ENCODE measurements at regions of chr2 and their contacts with region 1.

Region 1: DNA sequence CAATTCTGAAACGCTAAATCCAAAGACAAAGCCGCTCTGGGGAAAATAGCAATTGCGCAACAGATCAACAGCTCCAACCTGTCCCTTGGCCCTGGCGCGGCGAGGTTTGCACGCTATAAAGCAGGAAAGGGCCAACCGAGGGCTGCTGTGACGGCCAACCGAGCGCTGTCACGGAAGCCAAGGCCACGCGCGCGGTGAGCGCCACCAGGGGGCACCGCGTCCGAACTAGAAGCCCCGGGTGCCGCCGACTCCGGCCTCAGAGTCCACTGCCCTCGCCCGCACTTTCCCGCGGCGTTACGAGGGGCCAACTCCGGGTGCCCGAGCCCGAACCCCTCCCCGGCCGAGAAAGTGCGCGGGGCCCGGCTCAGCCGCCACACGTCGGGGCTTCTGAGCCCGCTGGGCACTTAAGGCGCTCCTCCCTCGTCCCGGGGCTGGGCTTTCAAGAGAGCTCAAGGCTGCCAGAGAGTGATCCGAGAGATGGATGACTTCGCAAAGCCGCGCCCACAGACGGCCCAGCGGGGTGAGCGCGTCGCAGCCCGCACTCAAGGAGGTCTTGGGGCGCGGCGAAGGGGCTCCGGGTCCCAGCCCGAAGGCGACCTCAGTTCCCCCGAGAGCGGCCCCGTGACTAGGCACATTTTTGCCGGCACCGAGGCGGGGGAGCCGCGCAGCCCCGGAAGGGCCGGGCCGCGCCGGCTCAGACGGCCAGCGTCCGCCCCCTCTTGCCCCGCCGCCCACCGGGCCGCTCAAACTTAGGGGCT is 897 bp downstream of the NFE2L2 start:
- DNase-seq: peak; percentile 95
- H3K4me3 Mint-ChIP-seq: peak overlapping the region; percentile 93
- H3K27ac Mint-ChIP-seq: peak overlapping the region; percentile 99
- H3K4me1 Mint-ChIP-seq: peaks cover 49% of the 10 kb centered on the region
- H3K27me3 Mint-ChIP-seq: peaks cover 3% of the 10 kb centered on the region

Region 2: GRCh38 chr2:176763851-176764404 is 499.7 kb before region 1 on chr2:
- CTCF ChIA-PET with region 1: no interaction called
- POLR2A ChIA-PET with region 1: no interaction called
- DNase-seq: no peak
- H3K4me3 Mint-ChIP-seq: no peak overlapping the region
- H3K27ac Mint-ChIP-seq: no peak overlapping the region
- H3K4me1 Mint-ChIP-seq: no peaks in the 10 kb centered on the region
- H3K27me3 Mint-ChIP-seq: peaks cover 20% of the 10 kb centered on the region

Region 3: DNA sequence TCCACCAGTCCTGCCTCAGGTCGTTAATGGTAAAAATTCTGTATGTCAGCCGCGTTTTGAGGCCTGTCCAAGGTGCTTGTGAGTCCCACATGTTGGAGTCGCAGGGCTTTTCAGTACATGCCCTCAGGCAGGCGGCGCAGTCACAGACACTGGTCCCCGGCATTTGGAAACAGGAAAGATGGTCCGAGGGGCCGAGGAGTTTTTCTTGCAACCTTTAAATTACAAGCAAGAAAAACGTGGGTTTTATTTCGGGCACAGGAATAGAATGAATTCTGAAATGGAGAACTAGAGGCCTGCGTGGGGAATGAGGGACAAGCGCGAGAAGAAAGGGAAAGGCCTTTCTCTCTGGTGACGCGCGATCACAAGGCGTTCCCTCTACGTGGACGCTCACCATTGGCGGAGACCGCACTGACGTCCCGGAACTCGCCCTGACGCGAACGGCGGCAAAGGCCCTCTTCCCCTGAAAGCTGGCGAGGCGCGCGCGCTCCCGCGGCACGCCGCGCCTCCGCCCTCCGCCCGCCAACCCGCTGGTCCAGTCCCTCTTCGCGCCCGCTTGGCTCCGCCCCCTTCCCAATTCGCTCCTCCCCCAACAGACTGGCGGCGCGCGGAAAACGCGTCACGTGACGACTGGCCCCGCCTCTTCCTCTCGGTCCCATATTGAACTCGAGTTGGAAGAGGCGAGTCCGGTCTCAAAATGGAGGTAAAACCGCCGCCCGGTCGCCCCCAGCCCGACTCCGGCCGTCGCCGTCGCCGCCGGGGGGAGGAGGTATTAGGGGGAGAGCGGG is 51.3 kb before region 1 on chr2 and contains the start of gene HNRNPA3:
- CTCF ChIA-PET with region 1: interaction called, 27 read pairs
- POLR2A ChIA-PET with region 1: interaction called, 255 read pairs
- DNase-seq: peak; percentile 100
- H3K4me3 Mint-ChIP-seq: peak within 1 kb of the TSS; percentile 94
- H3K27ac Mint-ChIP-seq: peak within 1 kb of the TSS; percentile 100
- H3K4me1 Mint-ChIP-seq: peaks cover 46% of the 10 kb centered on the region
- H3K27me3 Mint-ChIP-seq: no peaks in the 10 kb centered on the region
- total RNA-seq, gene HNRNPA3: 309 to 312 TPM

Region 4: DNA sequence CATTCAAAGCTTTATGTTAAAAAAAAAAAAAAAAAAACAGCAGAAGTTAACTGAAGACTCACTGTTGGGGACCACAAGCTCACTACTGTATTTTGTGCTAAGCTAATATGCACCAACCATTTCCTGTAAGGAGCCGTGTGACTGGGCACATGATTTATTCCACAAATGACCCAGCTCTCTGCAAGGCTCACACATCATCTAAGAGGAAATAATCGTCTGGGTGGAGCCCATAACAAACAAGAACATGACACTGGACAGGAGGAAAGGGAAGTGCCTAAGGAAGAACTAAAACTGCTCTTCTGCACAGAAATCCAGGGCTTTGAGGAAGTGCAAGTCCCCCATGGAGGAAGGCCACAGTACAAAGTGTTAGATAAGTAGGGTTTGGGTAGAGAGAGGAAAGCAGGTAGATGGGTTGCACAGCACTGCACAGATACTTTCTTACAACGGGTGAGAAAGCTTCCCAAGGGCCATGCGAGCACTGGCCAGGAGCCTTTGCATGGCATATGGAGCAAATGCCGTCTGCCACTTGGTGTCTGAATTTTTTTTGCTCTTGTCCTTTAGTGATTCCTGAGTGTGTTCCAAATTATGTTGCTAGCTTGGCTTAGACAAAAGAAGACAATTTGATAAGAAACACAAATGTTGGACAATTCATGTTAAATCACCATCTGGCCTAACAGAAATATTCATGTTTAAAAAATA is 23.5 kb before region 1 on chr2:
- CTCF ChIA-PET with region 1: interaction called, 57 read pairs
- POLR2A ChIA-PET with region 1: interaction called, 142 read pairs
- DNase-seq: peak; percentile 64
- H3K4me3 Mint-ChIP-seq: peak overlapping the region; percentile 34
- H3K27ac Mint-ChIP-seq: peak overlapping the region; percentile 84
- H3K4me1 Mint-ChIP-seq: peaks cover 74% of the 10 kb centered on the region
- H3K27me3 Mint-ChIP-seq: no peaks in the 10 kb centered on the region

Region 5: GRCh38 chr2:177289824-177290628 is 26.4 kb after region 1 on chr2:
- CTCF ChIA-PET with region 1: interaction called, 125 read pairs
- POLR2A ChIA-PET with region 1: interaction called, 187 read pairs
- DNase-seq: peak; percentile 35
- H3K4me3 Mint-ChIP-seq: peak overlapping the region; percentile 45
- H3K27ac Mint-ChIP-seq: peak overlapping the region; percentile 90
- H3K4me1 Mint-ChIP-seq: peaks cover 41% of the 10 kb centered on the region
- H3K27me3 Mint-ChIP-seq: no peaks in the 10 kb centered on the region

Region 6: DNA sequence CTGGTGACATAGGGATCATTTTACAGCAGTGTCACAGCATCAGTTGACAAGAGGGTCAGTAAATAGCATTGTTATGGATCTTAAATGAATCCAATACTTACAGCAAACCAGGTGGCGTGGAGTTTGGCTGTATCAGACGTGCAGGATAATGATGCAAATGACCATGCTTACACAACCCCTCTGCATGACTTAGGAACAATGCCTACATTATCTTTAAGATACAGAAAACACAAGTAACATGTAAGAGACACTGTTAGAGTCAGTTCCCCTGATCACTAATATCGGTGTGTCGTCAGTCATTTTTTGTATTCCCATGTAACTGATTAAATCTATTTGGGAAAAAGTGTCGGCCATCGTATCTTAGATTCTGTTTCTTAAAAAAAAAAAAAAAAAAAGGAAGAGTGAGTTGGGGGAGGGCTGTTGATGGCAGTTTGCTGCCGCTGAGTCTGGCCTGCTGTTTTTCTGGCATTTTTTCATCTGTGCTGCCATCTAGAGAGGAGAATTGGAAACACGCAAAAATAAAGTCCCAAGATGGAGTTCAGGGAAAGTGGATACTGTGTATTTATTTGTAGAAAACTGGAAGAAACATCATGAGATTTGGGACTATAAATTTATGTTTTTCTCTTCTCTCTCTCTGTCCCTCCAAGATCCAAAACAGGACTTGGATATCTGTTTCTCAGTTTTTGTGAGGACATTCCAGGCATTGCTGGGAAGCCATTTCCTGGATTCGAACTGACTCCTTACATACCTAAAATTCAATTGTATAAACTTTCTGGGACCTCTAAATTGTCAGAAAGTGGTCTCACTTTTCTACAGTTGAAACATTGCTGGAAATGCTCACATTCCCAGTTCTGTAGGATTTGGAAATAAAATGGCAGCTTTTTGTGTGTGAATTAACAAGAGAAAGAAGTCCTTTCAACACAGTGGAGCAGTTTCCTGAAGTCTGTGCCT is 68.7 kb after region 1 on chr2:
- CTCF ChIA-PET with region 1: interaction called, 25 read pairs
- POLR2A ChIA-PET with region 1: interaction called, 17 read pairs
- DNase-seq: peak; percentile 41
- H3K4me3 Mint-ChIP-seq: no peak overlapping the region
- H3K27ac Mint-ChIP-seq: no peak overlapping the region
- H3K4me1 Mint-ChIP-seq: peaks cover 12% of the 10 kb centered on the region
- H3K27me3 Mint-ChIP-seq: no peaks in the 10 kb centered on the region

Region 7: GRCh38 chr2:177353187-177353478 is 89.5 kb after region 1 on chr2:
- CTCF ChIA-PET with region 1: no interaction called
- POLR2A ChIA-PET with region 1: no interaction called
- DNase-seq: no peak
- H3K4me3 Mint-ChIP-seq: no peak overlapping the region
- H3K27ac Mint-ChIP-seq: no peak overlapping the region
- H3K4me1 Mint-ChIP-seq: no peaks in the 10 kb centered on the region
- H3K27me3 Mint-ChIP-seq: no peaks in the 10 kb centered on the region

Region 8: DNA sequence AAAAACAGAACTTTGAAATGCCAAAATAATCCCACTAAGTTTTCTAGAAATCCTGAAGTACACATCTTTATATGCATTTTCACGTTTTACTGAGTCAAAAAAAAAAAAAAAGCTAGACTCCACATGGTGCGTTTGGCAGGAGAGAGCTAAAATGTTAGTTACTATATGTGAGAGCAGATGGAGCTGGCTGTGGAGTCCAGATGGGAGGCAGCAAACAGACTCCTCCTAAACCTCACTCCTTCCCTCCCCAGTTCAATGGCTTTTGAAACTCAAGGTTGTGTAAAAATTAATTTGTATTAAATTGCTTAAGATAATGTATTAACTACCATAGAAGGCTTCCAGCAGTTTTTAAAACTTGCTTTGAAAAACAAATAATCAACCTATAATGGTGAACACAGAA is 377.7 kb after region 1 on chr2:
- CTCF ChIA-PET with region 1: no interaction called
- POLR2A ChIA-PET with region 1: no interaction called
- DNase-seq: no peak
- H3K4me3 Mint-ChIP-seq: no peak overlapping the region
- H3K27ac Mint-ChIP-seq: no peak overlapping the region
- H3K4me1 Mint-ChIP-seq: no peaks in the 10 kb centered on the region
- H3K27me3 Mint-ChIP-seq: peaks cover 8% of the 10 kb centered on the region

Measured in activated CD4-positive, alpha-beta memory T cell treated with anti-CD3 and anti-CD28 coated beads, Interleukin-2, amount 10 ng/mL, durations not matched to agents 7 days and 5 days (primary cell).